A673 (cell line): ENCODE measurements at regions of chr5 and their contacts with region 1.

Region 1: GRCh38 chr5:76544268-76544926 is 78.8 kb downstream of the F2RL2 start:
- DNase-seq: peak; percentile 81
- H3K4me3 ChIP-seq: no peak overlapping the region
- H3K27ac ChIP-seq: no peak overlapping the region
- H3K4me1 ChIP-seq: peaks cover 40% of the 10 kb centered on the region
- H3K27me3 ChIP-seq: no peaks in the 10 kb centered on the region
- CTCF ChIP-seq: peak; percentile 89

Region 2: DNA sequence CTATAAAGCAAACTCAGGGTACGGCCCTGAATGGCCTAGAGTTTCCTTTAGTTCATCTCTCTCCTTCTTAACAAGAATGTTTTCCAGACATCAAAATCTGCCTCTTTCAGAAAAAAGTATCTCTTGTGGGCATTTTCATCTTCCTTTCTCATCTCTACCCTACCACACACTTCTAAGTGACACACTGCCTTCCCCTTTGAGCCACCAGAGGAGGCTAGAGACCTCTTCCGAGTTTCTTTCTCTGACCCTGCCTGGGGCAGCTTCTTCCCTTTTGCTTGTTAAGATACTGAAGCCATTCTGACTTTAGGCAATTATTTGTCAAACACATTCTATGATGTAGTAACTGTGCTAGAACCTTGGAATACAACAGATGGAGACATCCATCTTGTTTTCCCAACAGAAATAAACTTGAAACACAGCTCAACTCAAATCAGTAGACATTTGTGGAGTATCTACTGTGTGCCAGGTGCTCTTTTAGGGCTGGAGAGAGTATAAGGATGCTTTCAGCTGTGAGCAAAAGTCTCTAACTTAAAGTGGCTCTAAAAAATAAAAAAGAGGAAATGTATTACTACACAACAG is 469.8 kb before region 1 on chr5:
- CTCF ChIA-PET with region 1: no interaction called
- POLR2A ChIA-PET with region 1: no interaction called
- intact Hi-C with region 1: loop called (anchors 10 kb)
- DNase-seq: peak; percentile 56
- H3K4me3 ChIP-seq: no peak overlapping the region
- H3K27ac ChIP-seq: no peak overlapping the region
- H3K4me1 ChIP-seq: no peaks in the 10 kb centered on the region
- H3K27me3 ChIP-seq: peaks cover 30% of the 10 kb centered on the region
- CTCF ChIP-seq: peak; percentile 74

Region 3: GRCh38 chr5:76337953-76338451 is 206.4 kb before region 1 on chr5:
- CTCF ChIA-PET with region 1: no interaction called
- POLR2A ChIA-PET with region 1: no interaction called
- intact Hi-C with region 1: loop called (anchors 2 kb)
- DNase-seq: peak; percentile 83
- H3K4me3 ChIP-seq: no peak overlapping the region
- H3K27ac ChIP-seq: no peak overlapping the region
- H3K4me1 ChIP-seq: peaks cover 6% of the 10 kb centered on the region
- H3K27me3 ChIP-seq: no peaks in the 10 kb centered on the region
- CTCF ChIP-seq: peak; percentile 55

Region 4: GRCh38 chr5:76402886-76403765 is 141.3 kb before region 1 on chr5 and contains the start of gene IQGAP2:
- CTCF ChIA-PET with region 1: interaction called, 20 read pairs
- POLR2A ChIA-PET with region 1: no interaction called
- intact Hi-C with region 1: loop called (anchors 1 kb)
- DNase-seq: peak; percentile 90
- H3K4me3 ChIP-seq: peak within 1 kb of the TSS; percentile 89
- H3K27ac ChIP-seq: peak within 1 kb of the TSS; percentile 87
- H3K4me1 ChIP-seq: peaks cover 25% of the 10 kb centered on the region
- H3K27me3 ChIP-seq: no peaks in the 10 kb centered on the region
- CTCF ChIP-seq: peak; percentile 85
- total RNA-seq, gene IQGAP2: 26.8 and 34.0 TPM in 2 replicates

Region 5: DNA sequence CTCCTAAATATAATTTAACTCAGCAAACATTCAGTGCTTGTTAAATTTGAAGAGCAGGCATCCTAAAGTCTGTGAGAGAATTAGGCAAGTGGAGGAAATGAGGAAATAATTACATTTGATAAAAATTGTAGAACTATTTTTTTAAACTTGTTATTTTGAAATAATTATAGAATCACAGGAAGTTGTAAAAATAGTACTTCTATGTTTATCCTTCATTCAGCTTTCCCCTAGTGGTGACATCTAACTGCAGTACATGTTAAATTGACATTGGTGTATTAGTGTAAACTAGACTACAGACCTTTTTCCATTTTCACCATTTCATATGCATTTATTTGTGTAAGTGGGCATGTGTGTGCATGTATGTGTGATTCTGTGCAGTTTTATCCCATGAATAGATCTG is 27.2 kb after region 1 on chr5:
- CTCF ChIA-PET with region 1: no interaction called
- POLR2A ChIA-PET with region 1: no interaction called
- intact Hi-C with region 1: no loop called
- DNase-seq: peak; percentile 17
- H3K4me3 ChIP-seq: no peak overlapping the region
- H3K27ac ChIP-seq: no peak overlapping the region
- H3K4me1 ChIP-seq: no peaks in the 10 kb centered on the region
- H3K27me3 ChIP-seq: no peaks in the 10 kb centered on the region
- CTCF ChIP-seq: peak; percentile 41